Activated CD4-positive, alpha-beta T cell treated with anti-CD3 and anti-CD28 coated beads for 36 hours (primary cell): ENCODE measurements at regions of chr10 and their contacts with region 1.

Region 1: DNA sequence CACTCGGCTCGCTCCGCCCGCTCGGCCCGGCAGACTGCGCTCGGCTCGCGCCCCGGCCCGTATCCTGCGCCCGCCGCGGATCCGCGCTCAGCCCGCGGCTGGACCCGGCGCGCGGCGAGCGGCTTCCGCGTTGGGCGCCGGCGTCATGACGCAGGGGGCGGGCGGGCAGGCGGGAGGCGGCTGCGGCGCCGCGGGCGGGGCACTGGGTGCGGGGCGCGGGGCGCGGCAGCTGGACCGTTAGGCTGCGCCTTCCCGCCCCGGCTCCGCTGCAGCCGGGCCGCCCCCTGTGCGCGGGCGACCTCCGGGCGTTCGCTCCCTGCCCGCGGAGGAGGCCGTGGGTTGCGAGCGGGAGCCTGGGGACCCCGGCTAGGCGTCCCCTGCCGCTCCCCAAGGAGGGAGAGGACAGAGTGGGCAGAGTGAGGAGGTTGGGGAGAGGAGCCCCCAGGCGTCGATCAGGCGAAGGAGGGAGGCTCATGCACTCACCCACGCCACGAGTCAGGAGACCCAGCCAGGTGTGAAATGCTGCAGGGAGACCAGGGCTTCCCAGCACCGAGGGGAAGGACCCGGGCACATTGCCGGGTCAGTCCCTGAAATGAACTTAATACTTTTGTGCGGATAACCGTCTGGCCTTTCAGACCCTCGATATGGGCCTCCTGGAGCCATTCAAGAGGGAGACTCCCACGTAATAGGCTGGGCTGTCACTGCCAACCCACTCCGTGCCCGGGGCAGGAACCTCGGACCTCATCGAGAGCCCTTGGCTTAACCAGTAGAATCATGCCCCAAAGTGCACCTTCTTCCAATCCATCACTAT is at the start of gene PIP4K2A:
- DNase-seq: peak; percentile 86
- ATAC-seq: peak; percentile 86
- H3K4me3 Mint-ChIP-seq: peak within 1 kb of the TSS; percentile 86
- H3K27ac Mint-ChIP-seq: peak within 1 kb of the TSS; percentile 88
- H3K4me1 Mint-ChIP-seq: peaks cover 29% of the 10 kb centered on the region
- H3K27me3 Mint-ChIP-seq: no peaks in the 10 kb centered on the region
- total RNA-seq, gene PIP4K2A: 105 to 108 TPM

Region 2: DNA sequence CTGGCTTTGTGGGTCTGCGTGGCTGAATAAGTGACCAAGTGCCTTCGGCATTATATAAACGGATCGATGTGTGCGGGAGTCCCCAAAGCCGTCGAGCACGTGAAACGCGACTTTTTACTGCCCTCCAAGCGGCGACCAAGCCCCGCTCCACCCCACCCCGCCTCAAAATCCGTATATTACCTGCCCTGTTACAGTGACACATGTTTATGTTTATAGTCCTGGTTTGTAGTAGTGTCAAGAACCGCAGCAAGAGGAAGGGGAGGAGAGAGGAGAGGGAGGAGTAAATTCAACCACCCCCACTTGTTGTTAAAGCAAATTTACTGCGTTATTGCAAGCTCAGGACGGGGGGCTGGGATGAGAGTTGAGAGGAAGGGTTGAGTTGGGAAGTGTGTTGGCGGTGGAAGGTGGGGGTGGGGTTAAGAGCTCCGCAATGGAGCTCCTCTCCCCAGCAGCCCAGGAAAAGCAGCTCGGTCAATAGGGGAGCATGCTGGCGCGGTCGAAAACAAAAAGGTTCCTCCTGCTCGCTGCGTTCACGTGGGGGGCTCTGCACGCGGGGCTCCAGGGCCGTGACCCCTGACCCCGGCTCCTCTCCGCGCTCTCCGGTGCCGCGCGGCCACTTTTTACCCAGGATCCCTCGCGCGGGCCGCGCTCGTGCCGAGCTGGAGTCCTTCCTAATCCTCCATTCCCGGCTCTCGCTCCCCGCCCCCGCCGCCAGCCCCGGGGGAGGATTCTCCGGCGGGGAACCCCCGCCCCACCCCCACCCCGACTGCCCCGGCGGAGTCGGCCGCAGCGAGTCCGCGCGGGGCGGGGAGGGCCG is 1189.1 kb before region 1 on chr10 and contains the start of gene SKIDA1:
- CTCF ChIA-PET with region 1: no interaction called
- POLR2A ChIA-PET with region 1: no interaction called
- intact Hi-C with region 1: loop called in 1 of 2 experiments (anchors 5 kb)
- DNase-seq: peak; percentile 81
- ATAC-seq: peak; percentile 71
- H3K4me3 Mint-ChIP-seq: peak within 1 kb of the TSS; percentile 80
- H3K27ac Mint-ChIP-seq: peak within 1 kb of the TSS; percentile 96
- H3K4me1 Mint-ChIP-seq: peaks cover 24% of the 10 kb centered on the region
- H3K27me3 Mint-ChIP-seq: peaks cover 17% of the 10 kb centered on the region
- total RNA-seq, gene SKIDA1: 0.32 to 0.54 TPM

Region 3: DNA sequence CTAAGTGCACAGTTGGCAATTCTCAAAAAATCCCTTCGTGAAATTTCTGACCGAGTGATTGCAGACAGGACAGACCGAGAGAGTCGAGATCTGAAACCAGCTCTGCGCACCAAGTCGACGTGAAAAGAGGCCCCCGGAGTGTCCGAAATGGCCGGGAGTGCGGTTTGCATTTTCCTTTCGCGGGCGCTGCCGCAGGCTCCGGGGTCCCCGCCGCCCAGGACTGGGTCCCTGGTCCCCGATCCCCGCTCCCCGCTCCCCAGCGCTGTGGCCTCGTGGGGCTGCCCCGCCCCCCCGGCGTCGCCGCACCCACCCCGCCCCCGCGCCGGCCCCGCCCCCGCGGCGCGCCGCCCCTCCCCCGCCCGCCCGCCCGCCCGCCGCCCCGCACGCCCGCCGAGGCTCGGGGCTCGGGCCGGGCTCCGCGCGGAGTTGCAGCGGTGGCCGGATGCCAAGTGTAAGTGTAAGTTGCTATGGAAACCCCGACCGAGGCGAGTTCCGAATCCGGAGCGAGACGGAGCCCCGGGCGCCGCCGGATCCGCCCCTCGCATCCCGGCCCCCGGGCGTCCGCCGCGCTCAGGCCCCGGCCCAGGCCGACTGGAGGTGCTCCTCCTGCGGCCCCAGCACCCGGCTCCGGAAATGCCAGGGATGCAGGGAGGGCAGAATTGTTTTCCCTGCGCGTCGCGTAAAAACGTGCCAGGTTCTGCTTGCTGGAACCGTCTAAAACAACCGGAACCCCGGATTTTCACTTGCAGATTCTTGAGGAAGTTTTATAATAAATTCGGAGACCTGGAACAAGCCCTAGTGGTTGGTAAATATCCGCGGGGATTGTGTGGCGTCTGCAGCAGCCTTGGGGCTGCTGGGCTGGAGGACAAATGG is 389.2 kb before region 1 on chr10:
- CTCF ChIA-PET with region 1: no interaction called
- POLR2A ChIA-PET with region 1: no interaction called
- intact Hi-C with region 1: loop called in 1 of 2 experiments (anchors 10 kb)
- DNase-seq: peak; percentile 83
- ATAC-seq: peak; percentile 45
- H3K4me3 Mint-ChIP-seq: peak overlapping the region; percentile 88
- H3K27ac Mint-ChIP-seq: peak overlapping the region; percentile 64
- H3K4me1 Mint-ChIP-seq: peaks cover 35% of the 10 kb centered on the region
- H3K27me3 Mint-ChIP-seq: peaks cover 23% of the 10 kb centered on the region

Region 4: DNA sequence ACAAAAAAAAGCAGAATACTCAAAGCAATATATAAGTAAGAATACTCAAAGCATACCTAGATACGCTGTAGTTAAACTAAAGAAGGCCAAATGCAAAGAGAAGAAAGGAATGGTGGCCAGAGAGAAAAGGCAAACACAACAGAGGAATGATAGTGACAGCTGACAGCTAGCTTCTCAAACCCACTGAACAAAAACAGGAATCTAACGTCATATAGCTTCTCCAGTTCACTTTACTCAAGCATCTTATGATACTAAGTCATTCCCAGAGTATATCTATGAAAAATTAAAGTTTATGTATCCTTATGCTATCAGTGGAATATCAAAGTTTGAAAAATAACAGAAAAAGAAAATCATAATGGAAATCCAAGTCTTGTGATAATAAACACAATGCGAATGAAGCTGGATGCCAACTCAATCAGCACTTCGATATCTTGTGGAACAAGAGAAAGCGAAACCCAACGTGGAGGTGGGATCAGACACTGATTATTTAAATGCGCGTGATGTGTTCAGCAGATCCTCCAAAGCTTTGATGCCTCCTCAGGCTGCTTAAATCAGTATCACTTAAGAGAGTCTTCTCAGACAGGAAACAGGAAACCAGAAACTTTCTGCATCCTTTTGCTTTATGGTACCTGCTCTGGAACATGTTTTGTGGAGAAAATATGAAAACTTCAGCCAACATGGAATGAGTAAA is 103.1 kb before region 1 on chr10:
- CTCF ChIA-PET with region 1: interaction called, 3 read pairs
- POLR2A ChIA-PET with region 1: interaction called, 6 read pairs
- intact Hi-C with region 1: loop called in 1 of 2 experiments (anchors 1 kb)
- DNase-seq: peak; percentile 73
- ATAC-seq: peak; percentile 87
- H3K4me3 Mint-ChIP-seq: peak overlapping the region; percentile 65
- H3K27ac Mint-ChIP-seq: peak overlapping the region; percentile 76
- H3K4me1 Mint-ChIP-seq: peaks cover 92% of the 10 kb centered on the region
- H3K27me3 Mint-ChIP-seq: no peaks in the 10 kb centered on the region

Region 5: GRCh38 chr10:22655311-22655981 is 59.2 kb before region 1 on chr10:
- CTCF ChIA-PET with region 1: interaction called, 6 read pairs
- POLR2A ChIA-PET with region 1: interaction called, 5 read pairs
- intact Hi-C with region 1: loop called (anchors 1 to 2 kb)
- DNase-seq: peak; percentile 62
- ATAC-seq: peak; percentile 57
- H3K4me3 Mint-ChIP-seq: peak overlapping the region; percentile 63
- H3K27ac Mint-ChIP-seq: peak overlapping the region; percentile 85
- H3K4me1 Mint-ChIP-seq: peaks cover 98% of the 10 kb centered on the region
- H3K27me3 Mint-ChIP-seq: no peaks in the 10 kb centered on the region

Region 6: GRCh38 chr10:22742678-22743077 is 28.0 kb after region 1 on chr10:
- CTCF ChIA-PET with region 1: no interaction called
- POLR2A ChIA-PET with region 1: no interaction called
- intact Hi-C with region 1: no loop called
- DNase-seq: no peak
- ATAC-seq: no peak
- H3K4me3 Mint-ChIP-seq: no peak overlapping the region
- H3K27ac Mint-ChIP-seq: no peak overlapping the region
- H3K4me1 Mint-ChIP-seq: no peaks in the 10 kb centered on the region
- H3K27me3 Mint-ChIP-seq: no peaks in the 10 kb centered on the region

Region 7: GRCh38 chr10:23095404-23095965 is 380.8 kb after region 1 on chr10 and contains the start of gene MSRB2:
- CTCF ChIA-PET with region 1: no interaction called
- POLR2A ChIA-PET with region 1: no interaction called
- intact Hi-C with region 1: loop called in 1 of 2 experiments (anchors 2 kb)
- DNase-seq: peak; percentile 84
- ATAC-seq: peak; percentile 58
- H3K4me3 Mint-ChIP-seq: peak within 1 kb of the TSS; percentile 95
- H3K27ac Mint-ChIP-seq: peak within 1 kb of the TSS; percentile 92
- H3K4me1 Mint-ChIP-seq: peaks cover 39% of the 10 kb centered on the region
- H3K27me3 Mint-ChIP-seq: no peaks in the 10 kb centered on the region
- total RNA-seq, gene MSRB2: 8.2 to 9.0 TPM